ENCODE measurements at regions of chr2 and their contacts with region 1.

Region 1: GRCh38 chr2:68452168-68452900 is 14.8 kb downstream of the FBXO48 start:
- DNase-seq: no peak
- H3K4me3 ChIP-seq: no peak overlapping the region
- H3K27ac ChIP-seq: no peak overlapping the region
- H3K4me1 ChIP-seq: no peaks in the 10 kb centered on the region
- H3K27me3 ChIP-seq: no peaks in the 10 kb centered on the region
- CTCF ChIP-seq: no peak
- EP300 ChIP-seq: no peak
- POLR2A ChIP-seq: no peak

Region 2: GRCh38 chr2:68516051-68516955 is 64.0 kb after region 1 on chr2:
- intact Hi-C with region 1: loop called (anchors 10 kb)
- DNase-seq: no peak
- H3K4me3 ChIP-seq: no peak overlapping the region
- H3K27ac ChIP-seq: no peak overlapping the region
- H3K4me1 ChIP-seq: no peaks in the 10 kb centered on the region
- H3K27me3 ChIP-seq: no peaks in the 10 kb centered on the region
- CTCF ChIP-seq: no peak
- EP300 ChIP-seq: no peak
- POLR2A ChIP-seq: no peak

Measured in sigmoid colon (tissue), 7 donors.